RWPE1 (cell line): ENCODE measurements at regions of chr9 and their contacts with region 1.

Region 1: GRCh38 chr9:127311239-127311741 is 46.7 kb downstream of the GARNL3 start:
- DNase-seq: peak; percentile 43
- H3K27ac ChIP-seq: no peak overlapping the region
- CTCF ChIP-seq: peak; percentile 74

Region 2: DNA sequence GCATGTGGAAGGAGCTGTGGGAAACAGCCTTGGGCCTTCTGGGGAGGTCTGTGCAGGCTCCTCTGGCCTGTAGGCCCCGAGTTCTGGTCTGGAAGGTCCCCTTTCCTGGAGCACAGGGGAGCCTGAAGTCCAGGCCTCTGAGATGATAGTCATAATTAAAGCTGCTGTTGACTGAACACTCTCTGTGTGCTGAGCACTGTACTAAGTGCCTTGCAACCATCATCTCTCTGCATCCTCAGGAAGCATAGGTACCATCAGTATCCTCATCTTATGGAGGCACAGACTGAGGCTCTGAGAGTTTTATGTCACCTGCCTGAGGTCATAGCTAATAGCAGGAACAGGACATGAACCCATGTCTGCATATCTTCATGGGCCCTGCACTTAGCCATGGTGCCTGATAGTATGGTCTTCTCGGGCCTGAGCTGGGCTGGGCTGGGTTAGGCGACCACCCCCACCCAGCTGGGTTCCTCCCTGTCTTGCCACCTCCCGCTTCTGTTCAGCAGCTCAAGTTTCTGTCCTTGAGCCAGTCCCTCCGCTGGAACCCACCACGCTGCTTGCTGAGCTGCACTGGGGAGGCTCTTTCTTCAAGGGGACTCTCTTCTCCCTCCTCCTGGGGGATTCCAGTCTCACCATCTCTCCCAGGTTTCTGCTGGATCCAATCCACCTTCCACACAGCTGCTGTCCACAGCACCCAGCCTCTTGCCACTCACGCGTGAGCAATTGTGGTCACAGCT is 670.0 kb before region 1 on chr9:
- CTCF ChIA-PET with region 1: interaction called, 10 read pairs
- POLR2A ChIA-PET with region 1: no interaction called
- DNase-seq: no peak
- H3K27ac ChIP-seq: no peak overlapping the region
- CTCF ChIP-seq: no peak